ENCODE measurements at regions of chr4 and their contacts with region 1.

Region 1: GRCh38 chr4:100421361-100421978 is 96.4 kb downstream of the EMCN start:
- DNase-seq: peak in 2 of 9 experiments; percentile 7 to 35
- ATAC-seq: no peak
- H3K4me3 ChIP-seq: no peak overlapping the region
- H3K4me3 Mint-ChIP-seq: no peak overlapping the region
- H3K27ac ChIP-seq: no peak overlapping the region
- H3K27ac Mint-ChIP-seq: no peak overlapping the region
- H3K4me1 ChIP-seq: no peaks in the 10 kb centered on the region
- H3K4me1 Mint-ChIP-seq: no peaks in the 10 kb centered on the region
- H3K27me3 ChIP-seq: no peaks in the 10 kb centered on the region
- H3K27me3 Mint-ChIP-seq: no peaks in the 10 kb centered on the region
- CTCF ChIP-seq: peak; percentile 36

Region 2: DNA sequence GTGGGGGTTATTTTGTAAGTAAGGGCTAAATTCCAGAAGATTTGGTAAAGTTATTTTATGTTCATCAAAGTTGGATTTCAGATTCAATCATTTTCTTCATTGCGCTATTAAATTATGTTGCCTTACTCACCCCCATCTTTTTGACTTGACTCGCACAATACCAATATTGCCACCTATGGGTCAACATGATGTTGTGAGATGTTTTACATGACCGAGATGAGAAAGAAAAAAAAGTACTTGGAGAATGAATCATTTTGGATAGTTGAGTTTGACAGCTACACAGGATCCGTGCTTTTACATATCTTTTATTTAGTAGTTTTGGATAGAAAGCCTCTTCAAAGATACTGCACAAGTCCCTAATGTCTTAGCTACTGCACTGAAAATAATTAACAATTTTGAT is 320.6 kb after region 1 on chr4:
- CTCF ChIA-PET with region 1: no interaction called
- POLR2A ChIA-PET with region 1: no interaction called
- intact Hi-C with region 1: loop called in 1 of 2 experiments (anchors 5 kb)
- DNase-seq: peak in 2 of 9 experiments; percentile 4 to 22
- ATAC-seq: no peak
- H3K4me3 ChIP-seq: no peak overlapping the region
- H3K4me3 Mint-ChIP-seq: no peak overlapping the region
- H3K27ac ChIP-seq: no peak overlapping the region
- H3K27ac Mint-ChIP-seq: no peak overlapping the region
- H3K4me1 ChIP-seq: no peaks in the 10 kb centered on the region
- H3K4me1 Mint-ChIP-seq: no peaks in the 10 kb centered on the region
- H3K27me3 ChIP-seq: no peaks in the 10 kb centered on the region
- H3K27me3 Mint-ChIP-seq: no peaks in the 10 kb centered on the region
- CTCF ChIP-seq: no peak

Region 3: GRCh38 chr4:101724093-101724492 is 1302.6 kb after region 1 on chr4:
- CTCF ChIA-PET with region 1: no interaction called
- POLR2A ChIA-PET with region 1: no interaction called
- intact Hi-C with region 1: loop called in 1 of 2 experiments (anchors 10 kb)
- DNase-seq: peak in 1 of 9 experiments; percentile 3
- ATAC-seq: peak; percentile 58
- H3K4me3 ChIP-seq: no peak overlapping the region
- H3K4me3 Mint-ChIP-seq: no peak overlapping the region
- H3K27ac ChIP-seq: no peak overlapping the region
- H3K27ac Mint-ChIP-seq: no peak overlapping the region
- H3K4me1 ChIP-seq: no peaks in the 10 kb centered on the region
- H3K4me1 Mint-ChIP-seq: peaks cover 6% of the 10 kb centered on the region
- H3K27me3 ChIP-seq: no peaks in the 10 kb centered on the region
- H3K27me3 Mint-ChIP-seq: no peaks in the 10 kb centered on the region
- CTCF ChIP-seq: no peak

Region 4: DNA sequence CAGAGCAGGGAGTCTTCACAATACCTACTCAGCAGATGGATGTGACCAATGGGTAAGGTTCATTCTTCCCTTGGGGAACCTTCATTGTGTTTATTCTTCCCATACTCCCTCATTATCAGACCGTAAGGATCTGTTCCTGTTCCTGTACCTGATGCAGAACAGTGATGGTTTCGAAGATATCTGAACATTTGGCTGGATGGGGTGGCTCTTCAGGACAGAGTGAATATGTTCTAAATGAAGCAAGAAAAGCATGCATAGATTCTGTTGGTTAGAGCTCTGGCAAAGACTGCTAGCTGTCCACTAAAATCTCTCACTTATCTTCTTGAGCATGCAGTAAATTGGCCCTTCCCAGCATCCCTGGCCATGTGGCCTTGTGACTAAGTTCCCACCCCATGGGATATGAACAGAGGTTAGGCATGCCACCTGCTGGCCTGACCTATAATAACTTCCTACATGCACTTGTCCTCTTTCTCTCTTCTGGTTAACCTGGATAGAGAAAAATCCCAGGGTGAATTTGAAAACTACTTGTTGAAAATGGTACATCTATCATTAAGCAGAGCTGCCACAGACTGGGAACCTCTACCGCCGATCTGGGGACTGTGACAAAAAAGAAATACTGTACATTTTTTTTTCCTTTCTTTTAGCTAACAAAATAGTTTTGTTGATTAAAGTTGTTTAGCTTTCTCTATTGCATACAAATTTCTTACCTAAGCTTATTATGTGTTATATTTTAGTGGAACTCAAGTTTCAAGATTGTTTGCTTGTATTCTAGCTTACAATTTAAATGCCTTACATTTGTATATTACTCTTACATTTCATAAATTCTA is 1309.0 kb after region 1 on chr4:
- CTCF ChIA-PET with region 1: no interaction called
- POLR2A ChIA-PET with region 1: no interaction called
- intact Hi-C with region 1: loop called (anchors 2 to 10 kb)
- DNase-seq: peak in 7 of 9 experiments; percentile 24 to 69 (median 48)
- ATAC-seq: peak; percentile 67
- H3K4me3 ChIP-seq: no peak overlapping the region
- H3K4me3 Mint-ChIP-seq: no peak overlapping the region
- H3K27ac ChIP-seq: no peak overlapping the region
- H3K27ac Mint-ChIP-seq: no peak overlapping the region
- H3K4me1 ChIP-seq: no peaks in the 10 kb centered on the region
- H3K4me1 Mint-ChIP-seq: no peaks in the 10 kb centered on the region
- H3K27me3 ChIP-seq: no peaks in the 10 kb centered on the region
- H3K27me3 Mint-ChIP-seq: peaks cover 5% of the 10 kb centered on the region
- CTCF ChIP-seq: peak; percentile 65